ENCODE measurements at regions of chr6 and their contacts with region 1.

Region 1: DNA sequence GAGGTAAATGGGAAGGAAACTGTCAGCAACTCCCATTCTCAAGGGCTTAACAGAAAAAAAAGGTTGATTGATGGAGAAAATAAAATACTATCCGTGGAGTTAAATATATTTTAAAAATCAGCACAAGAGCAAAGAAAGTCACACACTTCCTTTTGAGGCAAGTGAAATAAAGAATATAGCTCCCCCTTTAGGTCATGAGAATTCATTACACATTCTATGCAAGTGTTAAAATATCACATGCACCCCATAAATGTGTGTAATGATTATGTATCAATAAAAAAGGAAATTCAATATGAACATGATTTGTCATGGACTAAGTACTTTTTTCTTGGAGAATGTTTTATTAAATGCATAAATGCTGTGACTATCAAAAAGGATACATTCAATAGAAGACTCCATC is 349.2 kb downstream of the TPBG start:
- DNase-seq: no peak
- ATAC-seq: no peak

Region 2: DNA sequence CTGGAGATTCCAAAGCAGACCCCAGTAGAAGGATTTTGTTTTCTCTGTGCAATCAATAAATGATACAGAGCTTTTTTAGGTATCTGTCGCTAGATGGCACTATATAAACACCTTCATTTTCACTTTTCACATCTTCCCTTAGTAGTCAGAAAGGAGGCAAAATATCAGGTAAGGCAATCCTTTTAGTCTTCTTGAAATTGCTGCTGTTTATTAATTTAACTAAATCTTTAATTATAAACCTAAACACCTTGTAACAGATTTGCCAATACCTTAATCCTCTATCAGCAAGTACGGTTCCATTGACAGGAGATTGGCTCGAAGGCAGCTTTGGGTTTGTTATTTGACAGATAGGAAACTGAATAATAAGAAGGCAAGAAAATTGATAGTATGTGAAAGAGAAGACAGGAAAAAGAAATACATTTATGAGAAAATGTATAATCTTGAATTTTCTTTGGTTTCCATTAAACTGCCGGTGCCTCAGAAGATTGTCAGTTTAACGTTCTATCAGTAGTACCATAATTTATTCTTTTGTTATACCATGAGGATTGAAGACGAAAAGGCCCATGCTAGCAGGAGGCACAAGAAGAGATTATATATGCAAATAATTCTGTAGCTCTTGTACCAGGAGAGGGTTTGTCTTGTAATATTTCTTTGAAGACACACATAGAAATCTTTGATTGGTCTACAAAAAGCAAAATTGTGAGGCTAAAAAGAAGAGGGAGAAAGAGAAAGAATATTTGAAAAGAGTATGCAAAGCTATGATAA is 441.8 kb before region 1 on chr6:
- intact Hi-C with region 1: loop called in 1 of 2 experiments (anchors 10 kb)
- DNase-seq: no peak
- ATAC-seq: no peak

Region 3: DNA sequence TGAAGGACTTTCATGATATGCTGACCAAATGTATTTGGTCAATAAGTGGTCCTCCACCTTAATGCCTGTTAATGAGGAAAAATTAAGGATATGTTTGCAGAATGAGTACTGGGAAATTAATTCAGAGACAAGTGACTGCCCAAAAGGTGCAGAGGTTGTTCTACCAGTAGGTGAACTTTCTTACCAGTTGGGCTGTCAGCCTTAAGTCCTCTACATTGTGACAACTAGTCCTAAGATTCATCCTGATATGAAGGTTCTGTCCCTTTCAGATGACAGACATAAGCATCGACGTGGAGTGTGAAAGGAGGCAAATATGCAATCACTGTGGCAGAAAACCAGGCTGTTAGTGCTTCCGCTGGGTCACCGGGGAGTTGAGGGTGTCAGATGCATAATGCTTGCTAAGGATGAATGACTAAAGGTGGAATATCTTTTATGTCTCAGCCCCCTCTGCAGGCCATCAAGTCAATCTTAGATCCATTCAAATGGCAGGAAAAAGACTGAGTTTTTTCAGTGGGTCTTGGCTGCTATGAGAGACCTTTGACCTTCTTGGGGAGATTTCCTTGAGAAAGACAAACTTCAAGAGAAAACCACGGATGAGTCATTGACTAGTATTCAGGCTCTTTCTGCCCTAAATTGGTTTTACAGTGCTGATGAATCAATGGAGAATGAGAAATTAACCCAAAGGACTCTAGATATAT is 123.2 kb before region 1 on chr6:
- intact Hi-C with region 1: no loop called
- DNase-seq: no peak
- ATAC-seq: peak in 1 of 2 donors; percentile 21

Region 4: GRCh38 chr6:83127976-83128375 is 415.1 kb after region 1 on chr6:
- intact Hi-C with region 1: no loop called
- DNase-seq: no peak
- ATAC-seq: no peak

Measured in left cardiac atrium (tissue), 4 donors.